ENCODE measurements at regions of chr1 and their contacts with region 1.

Region 1: GRCh38 chr1:243946946-243947345 is 96.9 kb upstream of the AKT3 start:
- DNase-seq: peak; percentile 8
- H3K4me3 ChIP-seq: no peak overlapping the region
- H3K27ac ChIP-seq: no peak overlapping the region
- H3K4me1 ChIP-seq: peaks cover 20% of the 10 kb centered on the region
- H3K27me3 ChIP-seq: no peaks in the 10 kb centered on the region
- CTCF ChIP-seq: peak; percentile 42 to 45

Region 2: GRCh38 chr1:243850452-243851256 is 96.3 kb before region 1 on chr1:
- CTCF ChIA-PET with region 1: no interaction called
- dilution Hi-C with region 1: no loop called
- in situ Hi-C with region 1: no loop called
- intact Hi-C with region 1: loop called (anchors 5 kb)
- DNase-seq: peak; percentile 72
- H3K4me3 ChIP-seq: peak overlapping the region; percentile 60 to 75 (median 69)
- H3K27ac ChIP-seq: peak overlapping the region; percentile 72
- H3K4me1 ChIP-seq: peaks cover 10% of the 10 kb centered on the region
- H3K27me3 ChIP-seq: no peaks in the 10 kb centered on the region
- CTCF ChIP-seq: no peak

Region 3: GRCh38 chr1:243890576-243890975 is 56.4 kb before region 1 on chr1:
- CTCF ChIA-PET with region 1: no interaction called
- dilution Hi-C with region 1: loop called (anchors 5 kb)
- in situ Hi-C with region 1: no loop called
- intact Hi-C with region 1: no loop called
- DNase-seq: no peak
- H3K4me3 ChIP-seq: no peak overlapping the region
- H3K27ac ChIP-seq: no peak overlapping the region
- H3K4me1 ChIP-seq: no peaks in the 10 kb centered on the region
- H3K27me3 ChIP-seq: no peaks in the 10 kb centered on the region
- CTCF ChIP-seq: no peak

Region 4: GRCh38 chr1:243924188-243924945 is 22.6 kb before region 1 on chr1:
- CTCF ChIA-PET with region 1: no interaction called
- dilution Hi-C with region 1: no loop called
- in situ Hi-C with region 1: no loop called
- intact Hi-C with region 1: loop called (anchors 2 kb)
- DNase-seq: peak; percentile 50
- H3K4me3 ChIP-seq: no peak overlapping the region
- H3K27ac ChIP-seq: peak overlapping the region; percentile 28
- H3K4me1 ChIP-seq: peaks cover 24% of the 10 kb centered on the region
- H3K27me3 ChIP-seq: no peaks in the 10 kb centered on the region
- CTCF ChIP-seq: no peak

Region 5: GRCh38 chr1:243974451-243975292 is 27.7 kb after region 1 on chr1:
- CTCF ChIA-PET with region 1: no interaction called
- dilution Hi-C with region 1: loop called (anchors 5 kb)
- in situ Hi-C with region 1: no loop called
- intact Hi-C with region 1: no loop called
- DNase-seq: no peak
- H3K4me3 ChIP-seq: no peak overlapping the region
- H3K27ac ChIP-seq: no peak overlapping the region
- H3K4me1 ChIP-seq: no peaks in the 10 kb centered on the region
- H3K27me3 ChIP-seq: no peaks in the 10 kb centered on the region
- CTCF ChIP-seq: no peak

Measured in mammary epithelial cell (primary cell).